CD4-positive, alpha-beta T cell (primary cell): ENCODE measurements at regions of chr7 and their contacts with region 1.

Region 1: GRCh38 chr7:25389489-25390106 is 161.3 kb upstream of the NPVF start:
- DNase-seq: peak in 4 of 14 experiments; percentile 13 to 70 (median 44)
- ATAC-seq: peak; percentile 29
- H3K4me3 ChIP-seq: no peak overlapping the region
- H3K4me3 Mint-ChIP-seq: no peak overlapping the region
- H3K27ac ChIP-seq: no peak overlapping the region
- H3K27ac Mint-ChIP-seq: no peak overlapping the region
- H3K4me1 ChIP-seq: no peaks in the 10 kb centered on the region
- H3K4me1 Mint-ChIP-seq: no peaks in the 10 kb centered on the region
- H3K27me3 ChIP-seq: no peaks in the 10 kb centered on the region
- H3K27me3 Mint-ChIP-seq: peaks cover 4% of the 10 kb centered on the region
- CTCF ChIP-seq: peak; percentile 44

Region 2: DNA sequence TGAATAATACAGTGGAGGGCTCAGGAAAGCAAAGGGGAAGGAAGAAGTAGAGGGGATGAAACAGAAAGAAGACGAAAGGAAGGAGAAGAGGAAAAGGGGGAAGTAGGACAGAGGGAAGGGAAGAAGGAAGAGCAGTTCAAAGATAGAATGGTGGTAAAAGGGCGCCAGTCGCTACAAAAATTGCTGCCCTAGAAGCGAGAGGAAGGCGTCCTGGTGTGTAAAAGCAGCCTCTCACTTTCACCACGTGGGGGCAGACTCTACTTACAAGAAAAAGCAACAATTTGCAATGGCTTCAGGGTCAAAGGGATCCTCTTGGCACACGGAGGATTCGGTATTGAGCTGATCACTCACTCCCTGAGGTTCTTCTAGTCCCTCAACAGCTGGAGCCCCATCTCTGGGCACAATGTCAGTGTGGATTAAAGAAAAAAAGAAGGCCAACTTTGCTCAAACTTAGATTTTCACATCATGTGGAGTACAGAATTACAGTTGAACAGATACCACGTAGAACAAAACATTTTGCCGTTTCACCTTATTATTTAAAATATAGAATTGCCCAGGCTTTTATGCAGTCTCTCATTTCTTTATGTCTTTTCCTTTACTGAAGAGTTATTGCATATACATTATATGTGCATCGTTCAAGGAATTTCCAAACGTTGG is 129.9 kb before region 1 on chr7:
- CTCF ChIA-PET with region 1: interaction called, 4 read pairs
- POLR2A ChIA-PET with region 1: interaction called, 3 read pairs
- intact Hi-C with region 1: loop called (anchors 1 kb)
- DNase-seq: peak; percentile 35 to 86 (median 57)
- ATAC-seq: peak; percentile 71
- H3K4me3 ChIP-seq: no peak overlapping the region
- H3K4me3 Mint-ChIP-seq: peak overlapping the region; percentile 76
- H3K27ac ChIP-seq: no peak overlapping the region
- H3K27ac Mint-ChIP-seq: peak overlapping the region; percentile 60
- H3K4me1 ChIP-seq: peaks cover 9% of the 10 kb centered on the region
- H3K4me1 Mint-ChIP-seq: peaks cover 33% of the 10 kb centered on the region
- H3K27me3 ChIP-seq: no peaks in the 10 kb centered on the region
- H3K27me3 Mint-ChIP-seq: no peaks in the 10 kb centered on the region
- CTCF ChIP-seq: peak; percentile 82

Region 3: GRCh38 chr7:25565949-25566348 is 176.4 kb after region 1 on chr7:
- CTCF ChIA-PET with region 1: no interaction called
- POLR2A ChIA-PET with region 1: interaction called, 3 read pairs
- intact Hi-C with region 1: loop called (anchors 1 kb)
- DNase-seq: peak; percentile 41 to 86 (median 59)
- ATAC-seq: peak; percentile 61
- H3K4me3 ChIP-seq: no peak overlapping the region
- H3K4me3 Mint-ChIP-seq: no peak overlapping the region
- H3K27ac ChIP-seq: no peak overlapping the region
- H3K27ac Mint-ChIP-seq: no peak overlapping the region
- H3K4me1 ChIP-seq: no peaks in the 10 kb centered on the region
- H3K4me1 Mint-ChIP-seq: peaks cover 7% of the 10 kb centered on the region
- H3K27me3 ChIP-seq: no peaks in the 10 kb centered on the region
- H3K27me3 Mint-ChIP-seq: no peaks in the 10 kb centered on the region
- CTCF ChIP-seq: peak; percentile 100